GM12878 (cell line): ENCODE measurements at regions of chr1 and their contacts with region 1.

Region 1: GRCh38 chr1:40153073-40153770 is 8.0 kb upstream of the RLF start:
- DNase-seq: peak; percentile 59
- ATAC-seq: peak; percentile 85
- H3K4me3 ChIP-seq: peak overlapping the region; percentile 56; the same call in 1 of the 2 replicates
- H3K27ac ChIP-seq: peak overlapping the region; percentile 80
- H3K4me1 ChIP-seq: peaks cover 13% of the 10 kb centered on the region
- H3K27me3 ChIP-seq: no peaks in the 10 kb centered on the region
- CTCF ChIP-seq: peak; percentile 53 to 76 (median 71); a peak in 5 of 6 replicates
- EP300 ChIP-seq: no peak
- POLR2A ChIP-seq: no peak
- RAD21 ChIP-seq: peak; percentile 81

Region 2: DNA sequence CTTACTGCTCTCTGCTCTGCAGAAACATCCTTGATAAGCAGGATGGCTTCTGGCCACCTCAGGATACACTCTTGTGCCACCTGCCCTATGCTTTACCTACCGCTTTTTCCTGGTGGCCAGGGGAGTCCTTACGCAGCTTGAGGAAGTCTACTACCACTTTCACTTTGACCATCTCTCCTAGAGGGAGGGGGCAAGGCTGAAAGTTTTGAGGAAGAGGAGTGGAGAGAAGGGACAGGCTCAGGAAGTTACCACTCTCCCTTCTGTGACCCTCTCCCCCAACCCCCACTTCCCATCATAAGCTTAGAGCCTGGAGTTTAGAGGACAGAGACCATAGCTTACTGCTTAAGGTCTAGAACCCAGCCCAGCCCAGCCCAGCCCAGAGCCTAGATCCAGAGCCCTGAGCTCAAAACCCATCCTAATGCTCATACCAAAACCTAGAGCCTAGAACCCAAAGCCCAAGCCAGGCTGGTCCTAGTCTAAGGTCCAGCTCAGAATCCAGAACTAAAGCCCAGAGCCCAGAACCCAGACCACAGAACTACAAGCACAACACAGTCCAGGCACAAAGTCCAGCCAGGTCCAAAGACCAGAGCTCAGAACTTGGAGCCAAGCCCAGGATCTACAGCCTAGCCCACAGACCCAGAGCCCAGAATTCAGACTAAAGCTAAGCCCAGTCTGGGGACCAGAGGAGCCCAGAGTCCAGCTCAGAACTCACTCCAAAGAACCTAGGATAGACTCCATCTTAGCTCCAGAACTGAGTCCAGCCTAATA is 216.3 kb before region 1 on chr1:
- CTCF ChIA-PET with region 1: no interaction called
- POLR2A ChIA-PET with region 1: no interaction called
- RAD21 ChIA-PET with region 1: no interaction called
- SMC1A ChIA-PET with region 1: no interaction called
- in situ Hi-C with region 1: no loop called
- intact Hi-C with region 1: no loop called
- DNase-seq: no peak
- ATAC-seq: no peak
- H3K4me3 ChIP-seq: no peak overlapping the region
- H3K27ac ChIP-seq: no peak overlapping the region
- H3K4me1 ChIP-seq: no peaks in the 10 kb centered on the region
- H3K27me3 ChIP-seq: no peaks in the 10 kb centered on the region
- CTCF ChIP-seq: no peak
- EP300 ChIP-seq: no peak
- POLR2A ChIP-seq: no peak
- RAD21 ChIP-seq: no peak

Region 3: GRCh38 chr1:40178200-40178599 is 25.0 kb after region 1 on chr1:
- CTCF ChIA-PET with region 1: interaction called, 90 read pairs
- POLR2A ChIA-PET with region 1: interaction called, 4 read pairs
- RAD21 ChIA-PET with region 1: interaction called, 8 read pairs
- SMC1A ChIA-PET with region 1: interaction called, 62 read pairs
- in situ Hi-C with region 1: no loop called
- intact Hi-C with region 1: no loop called
- DNase-seq: no peak
- ATAC-seq: no peak
- H3K4me3 ChIP-seq: no peak overlapping the region
- H3K27ac ChIP-seq: no peak overlapping the region
- H3K4me1 ChIP-seq: no peaks in the 10 kb centered on the region; the same call in 1 of the 2 replicates
- H3K27me3 ChIP-seq: no peaks in the 10 kb centered on the region
- CTCF ChIP-seq: no peak
- EP300 ChIP-seq: no peak
- POLR2A ChIP-seq: no peak
- RAD21 ChIP-seq: no peak

Region 4: GRCh38 chr1:40224040-40224439 is 70.8 kb after region 1 on chr1:
- CTCF ChIA-PET with region 1: interaction called, 10 read pairs
- POLR2A ChIA-PET with region 1: interaction called, 3 read pairs
- RAD21 ChIA-PET with region 1: interaction called, 5 read pairs
- SMC1A ChIA-PET with region 1: interaction called, 15 read pairs
- in situ Hi-C with region 1: no loop called
- intact Hi-C with region 1: no loop called
- DNase-seq: no peak
- ATAC-seq: no peak; the same call in 2 of the 3 replicates
- H3K4me3 ChIP-seq: no peak overlapping the region
- H3K27ac ChIP-seq: no peak overlapping the region
- H3K4me1 ChIP-seq: peaks cover 23% of the 10 kb centered on the region; the same call in 1 of the 2 replicates
- H3K27me3 ChIP-seq: no peaks in the 10 kb centered on the region
- CTCF ChIP-seq: no peak
- EP300 ChIP-seq: no peak
- POLR2A ChIP-seq: no peak
- RAD21 ChIP-seq: no peak

Region 5: GRCh38 chr1:40264354-40264781 is 111.1 kb after region 1 on chr1:
- CTCF ChIA-PET with region 1: interaction called, 7 read pairs
- POLR2A ChIA-PET with region 1: no interaction called
- RAD21 ChIA-PET with region 1: interaction called, 6 read pairs
- SMC1A ChIA-PET with region 1: interaction called, 10 read pairs
- in situ Hi-C with region 1: no loop called
- intact Hi-C with region 1: no loop called
- DNase-seq: no peak
- ATAC-seq: peak; percentile 69
- H3K4me3 ChIP-seq: no peak overlapping the region
- H3K27ac ChIP-seq: no peak overlapping the region
- H3K4me1 ChIP-seq: peaks cover 5% of the 10 kb centered on the region; the same call in 1 of the 2 replicates
- H3K27me3 ChIP-seq: no peaks in the 10 kb centered on the region
- CTCF ChIP-seq: no peak
- EP300 ChIP-seq: no peak
- POLR2A ChIP-seq: no peak
- RAD21 ChIP-seq: no peak

Region 6: GRCh38 chr1:40385437-40386358 is 232.5 kb after region 1 on chr1:
- CTCF ChIA-PET with region 1: interaction called, 15 read pairs
- POLR2A ChIA-PET with region 1: interaction called, 14 read pairs
- RAD21 ChIA-PET with region 1: interaction called, 12 read pairs
- SMC1A ChIA-PET with region 1: interaction called, 12 read pairs
- in situ Hi-C with region 1: no loop called
- intact Hi-C with region 1: no loop called
- DNase-seq: peak; percentile 98
- ATAC-seq: peak; percentile 72
- H3K4me3 ChIP-seq: peak overlapping the region; percentile 66
- H3K27ac ChIP-seq: peak overlapping the region; percentile 97
- H3K4me1 ChIP-seq: peaks cover 65% of the 10 kb centered on the region
- H3K27me3 ChIP-seq: no peaks in the 10 kb centered on the region
- CTCF ChIP-seq: no peak
- EP300 ChIP-seq: peak; percentile 98 to 99
- POLR2A ChIP-seq: no peak
- RAD21 ChIP-seq: peak; percentile 15; the same call in 1 of the 2 replicates

Region 7: DNA sequence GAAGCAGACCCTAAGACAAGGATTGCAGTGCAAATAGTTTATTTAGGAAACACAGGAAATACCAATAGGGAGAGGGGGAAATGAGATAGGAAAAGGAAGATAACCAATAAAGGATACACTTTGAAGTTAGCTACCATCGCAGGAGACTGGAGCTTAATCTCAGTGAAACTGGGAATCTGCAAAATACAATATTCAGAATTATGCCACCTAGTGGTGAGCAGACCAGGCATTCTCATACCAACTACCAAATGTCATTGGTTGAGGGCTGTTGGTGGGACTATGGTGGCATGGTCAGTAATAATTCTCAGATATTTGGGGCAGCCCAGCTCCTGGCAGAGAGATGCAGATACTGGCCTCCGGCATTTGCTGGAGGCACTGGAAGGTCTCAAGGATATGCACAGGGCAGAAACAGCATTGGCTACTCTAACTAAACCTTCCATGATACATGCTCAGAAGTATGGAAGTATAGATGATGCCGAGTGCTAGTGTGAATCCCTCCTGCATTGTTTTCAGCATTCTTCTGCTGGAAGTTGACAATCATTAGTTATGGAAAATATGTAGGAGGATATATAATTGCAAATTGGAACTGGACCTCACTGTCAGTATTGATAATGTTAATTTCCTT is 285.3 kb after region 1 on chr1:
- CTCF ChIA-PET with region 1: interaction called, 14 read pairs
- POLR2A ChIA-PET with region 1: no interaction called
- RAD21 ChIA-PET with region 1: interaction called, 3 read pairs
- SMC1A ChIA-PET with region 1: interaction called, 9 read pairs
- in situ Hi-C with region 1: no loop called
- intact Hi-C with region 1: no loop called
- DNase-seq: no peak
- ATAC-seq: peak; percentile 84
- H3K4me3 ChIP-seq: no peak overlapping the region
- H3K27ac ChIP-seq: no peak overlapping the region
- H3K4me1 ChIP-seq: no peaks in the 10 kb centered on the region
- H3K27me3 ChIP-seq: no peaks in the 10 kb centered on the region
- CTCF ChIP-seq: peak; percentile 48 to 63 (median 53)
- EP300 ChIP-seq: no peak
- POLR2A ChIP-seq: no peak
- RAD21 ChIP-seq: peak; percentile 35; the same call in 1 of the 2 replicates